HCT116 (cell line): ENCODE measurements at regions of chr11 and their contacts with region 1.

Region 1: GRCh38 chr11:119381181-119381988 is at the start of gene USP2:
- DNase-seq: peak; percentile 93
- ATAC-seq: peak; percentile 96
- H3K4me3 ChIP-seq: peak within 1 kb of the TSS; percentile 63 to 65
- H3K27ac ChIP-seq: no peak within 1 kb of the TSS; the same call in 1 of the 2 replicates
- H3K4me1 ChIP-seq: peaks cover 6 to 33% of the 10 kb centered on the region in 2 experiments; a peak in 3 of 4 replicates
- H3K27me3 ChIP-seq: no peaks in the 10 kb centered on the region
- CTCF ChIP-seq: peak; percentile 83 to 86 (median 86)
- POLR2A ChIP-seq: no peak
- RAD21 ChIP-seq: peak; percentile 66
- total RNA-seq, gene USP2: 5.0 TPM

Region 2: GRCh38 chr11:118953265-118953664 is 428.1 kb before region 1 on chr11:
- CTCF ChIA-PET with region 1: no interaction called
- POLR2A ChIA-PET with region 1: no interaction called
- RAD21 ChIA-PET with region 1: no interaction called
- intact Hi-C with region 1: no loop called
- DNase-seq: no peak
- ATAC-seq: no peak
- H3K4me3 ChIP-seq: no peak overlapping the region
- H3K27ac ChIP-seq: no peak overlapping the region
- H3K4me1 ChIP-seq: peaks cover 0 to 19% of the 10 kb centered on the region in 2 experiments; a peak in 2 of 4 replicates
- H3K27me3 ChIP-seq: no peaks in the 10 kb centered on the region
- CTCF ChIP-seq: no peak
- POLR2A ChIP-seq: no peak
- RAD21 ChIP-seq: no peak

Region 3: GRCh38 chr11:119057000-119057769 is 324.2 kb before region 1 on chr11 and contains the start of gene HYOU1:
- CTCF ChIA-PET with region 1: no interaction called
- POLR2A ChIA-PET with region 1: no interaction called
- RAD21 ChIA-PET with region 1: no interaction called
- intact Hi-C with region 1: loop called (anchors 1 kb)
- DNase-seq: peak; percentile 87
- ATAC-seq: peak; percentile 95
- H3K4me3 ChIP-seq: peak within 1 kb of the TSS; percentile 75 to 96
- H3K27ac ChIP-seq: peak within 1 kb of the TSS; percentile 77
- H3K4me1 ChIP-seq: peaks cover 4 to 17% of the 10 kb centered on the region in 2 experiments; a peak in 3 of 4 replicates
- H3K27me3 ChIP-seq: no peaks in the 10 kb centered on the region
- CTCF ChIP-seq: peak in 2 of 3 experiments; percentile 22 to 34; a peak in 3 of 6 replicates
- POLR2A ChIP-seq: peak; percentile 63
- RAD21 ChIP-seq: no peak
- total RNA-seq, gene HYOU1: 181 TPM

Region 4: DNA sequence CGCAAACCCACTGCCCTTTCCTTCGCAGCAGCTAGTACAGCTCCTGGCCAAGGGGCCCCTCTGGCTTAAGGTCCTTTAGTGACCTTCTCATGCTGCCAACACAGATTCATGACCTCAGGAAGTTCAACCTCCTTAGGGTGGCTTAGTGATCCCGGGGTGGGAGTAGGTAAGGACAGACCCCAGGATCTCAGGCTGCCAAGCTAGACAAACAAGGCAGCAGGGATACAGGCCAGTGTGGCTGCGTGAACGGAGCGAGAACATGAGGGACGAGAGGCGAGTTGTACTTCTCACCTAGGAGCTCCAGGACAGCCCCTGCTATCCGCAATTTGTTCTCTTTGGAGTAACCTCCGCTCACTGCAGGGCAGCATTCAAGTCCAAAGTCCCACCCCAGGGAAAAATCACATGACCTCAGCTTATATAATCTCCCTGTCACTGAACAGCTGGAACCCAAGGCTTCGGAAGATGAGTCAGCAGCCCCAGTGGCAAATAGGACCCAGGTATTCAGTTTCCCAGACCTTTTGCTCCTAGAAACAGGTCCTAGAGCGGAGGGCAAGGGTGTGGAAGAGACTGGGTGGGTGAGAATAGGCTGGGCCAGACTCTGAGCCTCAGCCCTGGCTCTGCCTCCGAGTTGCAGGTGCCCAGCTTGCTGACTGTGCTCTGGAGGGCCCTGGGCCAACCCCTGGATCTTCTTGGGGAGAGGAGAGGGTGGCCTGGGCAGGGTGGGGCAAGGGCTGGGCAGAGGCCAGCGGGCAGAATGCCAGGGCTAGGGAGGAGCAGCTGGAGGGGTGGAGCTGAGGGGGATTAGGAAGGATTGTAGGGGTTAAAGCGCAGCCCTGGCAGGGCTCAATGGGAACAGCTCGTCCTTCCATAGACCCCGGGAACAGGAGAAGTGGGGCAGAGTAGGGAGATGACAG is 13.0 kb before region 1 on chr11:
- CTCF ChIA-PET with region 1: interaction called, 16 read pairs
- POLR2A ChIA-PET with region 1: no interaction called
- RAD21 ChIA-PET with region 1: no interaction called
- intact Hi-C with region 1: no loop called
- DNase-seq: no peak
- ATAC-seq: peak; percentile 21; the same call in 1 of the 2 replicates
- H3K4me3 ChIP-seq: no peak overlapping the region
- H3K27ac ChIP-seq: no peak overlapping the region
- H3K4me1 ChIP-seq: peaks cover 38 to 57% of the 10 kb centered on the region in 2 experiments
- H3K27me3 ChIP-seq: peaks cover 6% of the 10 kb centered on the region; the same call in 1 of the 2 replicates
- CTCF ChIP-seq: no peak
- POLR2A ChIP-seq: no peak
- RAD21 ChIP-seq: no peak